Right cardiac atrium (tissue), 5 donors: ENCODE measurements at regions of chr9 and their contacts with region 1.

Region 1: DNA sequence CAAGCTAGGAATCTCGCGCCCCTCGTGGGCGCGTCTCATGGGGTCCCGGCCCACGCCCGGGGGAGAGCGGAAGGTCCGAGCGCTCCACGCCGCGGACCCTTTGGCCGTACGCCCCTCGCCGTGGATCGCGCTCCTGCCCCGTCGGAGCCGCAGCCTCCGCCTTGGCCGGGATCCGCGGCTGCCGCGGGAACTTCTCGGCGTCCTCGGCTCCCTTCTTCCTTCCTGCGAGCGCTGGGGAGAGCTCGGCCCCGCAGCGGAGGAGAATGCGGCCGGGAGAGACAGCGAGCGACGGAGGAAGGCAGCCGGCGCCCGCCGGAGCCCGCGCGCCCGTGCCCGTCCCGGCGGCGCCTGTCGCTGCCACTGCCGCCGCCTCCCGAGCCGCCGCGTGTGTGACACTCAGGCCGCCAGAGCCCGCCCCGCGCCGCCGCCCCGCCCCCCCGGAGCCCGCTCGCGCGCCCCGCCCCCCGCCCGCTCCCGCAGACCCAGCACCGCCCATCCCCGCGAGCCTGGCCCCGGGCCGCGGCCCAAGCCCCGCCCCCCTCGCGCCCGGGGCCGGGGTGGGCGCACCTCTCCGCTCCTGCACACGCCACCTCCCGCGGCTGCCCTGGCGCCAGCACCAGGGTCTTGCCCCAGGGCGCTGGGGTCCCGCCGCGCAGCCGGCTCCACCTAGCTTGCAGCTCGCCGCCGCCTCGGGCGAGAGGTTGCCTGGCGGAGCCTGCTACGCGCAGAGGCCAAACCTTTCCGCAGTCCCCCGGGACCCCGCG is at the start of gene SHB:
- DNase-seq: peak; percentile 84 to 94 (median 94)
- ATAC-seq: peak; percentile 80 to 85
- H3K4me3 ChIP-seq: peak within 1 kb of the TSS; percentile 69
- H3K27ac ChIP-seq: peak within 1 kb of the TSS; percentile 87
- H3K4me1 ChIP-seq: peaks cover 4% of the 10 kb centered on the region
- H3K27me3 ChIP-seq: no peaks in the 10 kb centered on the region
- total RNA-seq, gene SHB: 25.7 to 38.9 (median 31.0) TPM

Region 2: DNA sequence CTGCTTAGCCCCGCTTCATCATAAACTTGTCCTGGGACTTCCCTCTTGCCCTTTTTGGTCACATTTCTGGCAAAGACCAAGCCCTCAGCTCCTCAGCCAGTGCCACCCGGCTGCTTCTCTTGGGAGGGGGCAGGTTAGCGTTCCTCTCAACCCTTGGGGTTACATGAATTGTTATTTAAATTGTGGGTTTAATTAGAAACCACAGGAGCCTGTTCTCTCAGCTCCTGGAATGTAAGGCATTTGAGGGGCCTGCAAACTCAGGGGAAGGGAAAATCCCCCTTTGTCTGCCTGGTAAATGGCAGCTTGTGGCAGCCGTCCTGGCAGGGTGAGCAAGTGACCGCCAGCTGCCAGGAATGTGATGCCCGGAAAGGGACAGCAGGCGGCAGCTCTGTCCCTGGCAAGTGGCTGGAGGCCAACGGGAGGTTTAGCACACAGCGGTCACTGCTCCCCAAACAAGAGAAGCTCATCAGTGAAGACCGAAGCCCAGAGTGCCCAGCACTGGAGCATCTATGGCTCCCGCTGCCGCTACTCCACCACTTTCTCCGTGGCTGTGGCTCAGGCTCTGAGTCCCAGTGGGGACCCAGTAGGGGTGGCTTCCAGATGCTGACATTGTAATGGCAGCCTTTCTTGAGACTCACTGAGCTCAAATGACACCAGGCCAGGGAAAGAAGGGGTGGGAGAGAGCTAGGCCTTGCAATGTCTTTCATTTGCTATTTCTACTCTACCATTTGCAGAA is 51.7 kb before region 1 on chr9:
- intact Hi-C with region 1: loop called in 3 of 4 experiments (anchors 5 to 10 kb)
- DNase-seq: peak; percentile 48 to 86 (median 83)
- ATAC-seq: peak; percentile 59 to 80
- H3K4me3 ChIP-seq: no peak overlapping the region
- H3K27ac ChIP-seq: peak overlapping the region; percentile 43
- H3K4me1 ChIP-seq: peaks cover 24% of the 10 kb centered on the region
- H3K27me3 ChIP-seq: no peaks in the 10 kb centered on the region

Region 3: GRCh38 chr9:38024016-38024681 is 44.9 kb before region 1 on chr9:
- intact Hi-C with region 1: loop called in 3 of 4 experiments (anchors 5 to 10 kb)
- DNase-seq: peak in 1 of 3 donors; percentile 47
- ATAC-seq: peak; percentile 25 to 32
- H3K4me3 ChIP-seq: no peak overlapping the region
- H3K27ac ChIP-seq: no peak overlapping the region
- H3K4me1 ChIP-seq: peaks cover 38% of the 10 kb centered on the region
- H3K27me3 ChIP-seq: no peaks in the 10 kb centered on the region